ENCODE measurements at regions of chr12 and their contacts with region 1.

Region 1: DNA sequence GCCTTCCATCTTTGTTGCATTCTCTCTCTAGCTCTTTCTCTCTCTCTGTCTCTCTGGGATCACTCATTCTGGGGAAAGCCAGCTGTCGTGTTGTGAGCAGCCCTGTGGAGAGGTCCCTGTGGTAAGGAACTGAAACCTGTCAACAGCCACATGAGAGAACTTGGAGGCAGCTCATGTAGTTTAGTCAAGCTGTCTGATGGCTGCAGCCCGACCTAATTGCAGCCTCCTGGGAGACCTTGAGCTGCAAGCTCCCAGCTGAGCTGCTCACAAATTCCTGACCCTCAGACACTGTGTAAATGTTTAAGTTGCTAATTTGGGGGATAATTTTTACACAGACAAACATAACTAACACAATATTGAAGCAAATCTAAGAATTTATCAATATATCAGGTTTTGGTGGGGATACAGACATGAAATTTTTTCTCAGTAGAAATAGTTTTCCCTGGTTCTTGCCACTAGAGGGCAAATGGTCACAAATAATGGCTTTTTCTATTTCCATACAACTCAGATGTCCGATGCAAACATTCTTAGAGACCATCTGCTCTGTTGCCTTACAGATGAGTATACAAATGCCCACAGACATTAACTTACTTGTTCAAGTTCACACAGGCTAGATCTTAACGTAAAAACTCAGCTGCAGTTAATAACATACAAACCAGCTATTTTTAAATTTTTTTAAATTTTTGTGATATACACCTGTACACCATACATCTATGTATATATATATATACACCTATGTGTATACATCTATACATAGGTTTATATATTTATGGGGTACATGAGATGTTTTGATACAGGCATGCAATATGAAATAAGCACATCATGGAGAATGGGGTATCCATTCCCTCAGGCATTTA is 15.5 kb upstream of the KRR1 start:
- DNase-seq: no peak
- H3K4me3 ChIP-seq: no peak overlapping the region
- H3K27ac ChIP-seq: no peak overlapping the region
- H3K4me1 ChIP-seq: no peaks in the 10 kb centered on the region
- H3K27me3 ChIP-seq: no peaks in the 10 kb centered on the region
- CTCF ChIP-seq: peak; percentile 25 to 66 (median 58)
- POLR2A ChIP-seq: no peak

Region 2: GRCh38 chr12:76037130-76038103 is 510.5 kb after region 1 on chr12:
- intact Hi-C with region 1: loop called (anchors 5 kb)
- DNase-seq: no peak
- H3K4me3 ChIP-seq: no peak overlapping the region
- H3K27ac ChIP-seq: no peak overlapping the region
- H3K4me1 ChIP-seq: peaks cover 6% of the 10 kb centered on the region
- H3K27me3 ChIP-seq: no peaks in the 10 kb centered on the region
- CTCF ChIP-seq: peak; percentile 63 to 82 (median 74)
- POLR2A ChIP-seq: no peak